CD4-positive, alpha-beta T cell (primary cell): ENCODE measurements at regions of chr12 and their contacts with region 1.

Region 1: DNA sequence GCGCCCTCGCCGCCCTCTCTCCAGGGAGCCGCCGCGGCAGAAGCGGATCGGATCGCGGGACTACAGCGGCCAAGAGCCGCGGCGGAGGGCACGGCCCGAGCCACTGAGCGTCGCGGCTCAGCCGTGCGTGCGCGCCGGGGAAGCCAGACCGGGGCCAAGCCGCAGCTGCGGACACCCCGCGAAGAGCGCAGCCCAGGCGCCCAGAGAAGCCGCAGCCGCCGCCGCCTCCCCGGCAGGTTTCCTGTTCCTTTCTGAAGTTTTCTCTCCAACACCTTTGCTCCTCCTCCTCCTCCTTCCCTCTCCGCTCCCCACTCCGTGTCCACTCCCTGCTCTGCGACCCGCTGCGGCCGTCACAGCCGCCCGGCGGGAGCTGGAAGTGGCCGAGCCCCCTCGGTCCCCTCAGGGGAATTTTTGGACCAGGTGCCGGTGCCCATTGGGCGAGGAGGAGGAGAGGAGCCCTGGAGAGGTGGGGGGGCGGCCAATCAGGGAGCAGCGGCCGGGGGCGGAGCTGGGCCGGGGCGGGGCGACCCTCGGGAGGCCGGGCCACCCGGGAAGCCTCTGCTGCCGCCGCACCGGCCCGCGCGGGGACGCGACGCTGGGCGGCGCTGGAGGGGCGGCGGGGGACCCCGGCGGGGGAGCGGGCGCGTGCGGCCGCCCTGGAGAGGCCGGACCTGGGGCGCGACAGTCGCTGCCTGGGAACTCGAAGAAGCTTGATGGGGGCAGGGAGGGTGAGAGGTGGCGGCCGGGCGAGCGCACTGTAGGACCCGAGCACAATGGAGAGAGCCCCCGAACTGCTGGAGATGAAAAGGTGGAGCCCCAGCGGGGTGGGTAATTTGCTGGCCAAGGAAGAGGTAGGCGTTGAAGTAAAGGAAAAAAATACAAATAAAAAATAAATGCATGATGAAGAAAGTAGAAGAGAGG is at the start of gene ITPR2:
- DNase-seq: peak; percentile 80 to 96 (median 92)
- ATAC-seq: peak; percentile 90
- H3K4me3 ChIP-seq: peak within 1 kb of the TSS; percentile 82
- H3K4me3 Mint-ChIP-seq: peak within 1 kb of the TSS; percentile 98
- H3K27ac ChIP-seq: peak within 1 kb of the TSS; percentile 89 to 92
- H3K27ac Mint-ChIP-seq: peak within 1 kb of the TSS; percentile 96
- H3K4me1 ChIP-seq: peaks cover 26% of the 10 kb centered on the region
- H3K4me1 Mint-ChIP-seq: peaks cover 47% of the 10 kb centered on the region
- H3K27me3 ChIP-seq: no peaks in the 10 kb centered on the region
- H3K27me3 Mint-ChIP-seq: no peaks in the 10 kb centered on the region
- CTCF ChIP-seq: peak; percentile 12
- total RNA-seq, gene ITPR2: 28.8 to 29.9 TPM

Region 2: DNA sequence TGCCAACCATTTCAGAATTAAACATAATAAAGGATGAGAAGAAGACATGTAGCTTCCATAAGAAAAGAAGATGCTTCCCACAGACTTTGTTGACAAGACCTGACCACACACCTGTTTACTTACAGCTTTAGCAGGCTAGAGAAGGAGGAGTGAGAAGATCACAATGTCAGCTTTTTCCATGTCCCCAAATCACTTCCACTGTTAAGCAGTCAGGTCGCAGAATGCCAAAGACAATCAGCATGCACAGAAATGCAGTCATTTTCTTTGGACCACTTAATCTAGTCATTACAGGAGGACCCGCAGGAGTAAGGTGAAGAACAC is 322.8 kb before region 1 on chr12:
- CTCF ChIA-PET with region 1: no interaction called
- POLR2A ChIA-PET with region 1: no interaction called
- intact Hi-C with region 1: no loop called
- DNase-seq: no peak
- ATAC-seq: no peak
- H3K4me3 ChIP-seq: no peak overlapping the region
- H3K4me3 Mint-ChIP-seq: no peak overlapping the region
- H3K27ac ChIP-seq: no peak overlapping the region
- H3K27ac Mint-ChIP-seq: no peak overlapping the region
- H3K4me1 ChIP-seq: no peaks in the 10 kb centered on the region
- H3K4me1 Mint-ChIP-seq: no peaks in the 10 kb centered on the region
- H3K27me3 ChIP-seq: no peaks in the 10 kb centered on the region
- H3K27me3 Mint-ChIP-seq: no peaks in the 10 kb centered on the region
- CTCF ChIP-seq: no peak

Region 3: DNA sequence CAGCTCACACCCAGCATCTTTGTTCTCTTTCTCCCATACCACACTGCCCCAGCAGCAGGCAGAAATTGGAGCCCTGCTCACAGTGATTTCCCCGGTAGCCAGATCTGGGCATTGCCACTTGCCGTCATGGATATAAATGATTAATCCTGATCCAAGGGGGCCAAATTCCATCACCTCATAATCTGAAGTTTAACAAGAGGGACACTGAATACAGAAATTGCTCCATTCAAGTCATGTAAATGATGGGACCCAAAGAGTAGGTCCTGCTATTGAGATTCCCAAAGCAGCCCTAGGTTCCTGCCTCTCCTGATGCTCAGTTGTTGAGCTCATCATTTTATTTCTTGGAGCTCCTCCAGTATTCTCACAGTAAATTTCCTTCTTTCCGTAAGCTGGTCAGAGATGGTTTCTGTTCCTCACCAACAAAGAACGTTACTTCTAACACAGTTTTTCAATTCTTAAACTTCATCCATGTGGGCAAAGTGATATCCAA is 11.8 kb before region 1 on chr12:
- CTCF ChIA-PET with region 1: interaction called, 12 read pairs
- POLR2A ChIA-PET with region 1: interaction called, 5 read pairs
- intact Hi-C with region 1: no loop called
- DNase-seq: no peak
- ATAC-seq: no peak
- H3K4me3 ChIP-seq: no peak overlapping the region
- H3K4me3 Mint-ChIP-seq: no peak overlapping the region
- H3K27ac ChIP-seq: no peak overlapping the region
- H3K27ac Mint-ChIP-seq: no peak overlapping the region
- H3K4me1 ChIP-seq: peaks cover 3% of the 10 kb centered on the region
- H3K4me1 Mint-ChIP-seq: peaks cover 43% of the 10 kb centered on the region
- H3K27me3 ChIP-seq: no peaks in the 10 kb centered on the region
- H3K27me3 Mint-ChIP-seq: no peaks in the 10 kb centered on the region
- CTCF ChIP-seq: no peak

Region 4: GRCh38 chr12:26884765-26885576 is 51.9 kb after region 1 on chr12:
- CTCF ChIA-PET with region 1: interaction called, 12 read pairs
- POLR2A ChIA-PET with region 1: interaction called, 6 read pairs
- intact Hi-C with region 1: no loop called
- DNase-seq: peak; percentile 68 to 91 (median 78)
- ATAC-seq: peak; percentile 100
- H3K4me3 ChIP-seq: peak overlapping the region; percentile 19
- H3K4me3 Mint-ChIP-seq: peak overlapping the region; percentile 36
- H3K27ac ChIP-seq: no peak overlapping the region
- H3K27ac Mint-ChIP-seq: no peak overlapping the region
- H3K4me1 ChIP-seq: peaks cover 9% of the 10 kb centered on the region
- H3K4me1 Mint-ChIP-seq: peaks cover 7% of the 10 kb centered on the region
- H3K27me3 ChIP-seq: no peaks in the 10 kb centered on the region
- H3K27me3 Mint-ChIP-seq: peaks cover 9% of the 10 kb centered on the region
- CTCF ChIP-seq: peak; percentile 96

Region 5: DNA sequence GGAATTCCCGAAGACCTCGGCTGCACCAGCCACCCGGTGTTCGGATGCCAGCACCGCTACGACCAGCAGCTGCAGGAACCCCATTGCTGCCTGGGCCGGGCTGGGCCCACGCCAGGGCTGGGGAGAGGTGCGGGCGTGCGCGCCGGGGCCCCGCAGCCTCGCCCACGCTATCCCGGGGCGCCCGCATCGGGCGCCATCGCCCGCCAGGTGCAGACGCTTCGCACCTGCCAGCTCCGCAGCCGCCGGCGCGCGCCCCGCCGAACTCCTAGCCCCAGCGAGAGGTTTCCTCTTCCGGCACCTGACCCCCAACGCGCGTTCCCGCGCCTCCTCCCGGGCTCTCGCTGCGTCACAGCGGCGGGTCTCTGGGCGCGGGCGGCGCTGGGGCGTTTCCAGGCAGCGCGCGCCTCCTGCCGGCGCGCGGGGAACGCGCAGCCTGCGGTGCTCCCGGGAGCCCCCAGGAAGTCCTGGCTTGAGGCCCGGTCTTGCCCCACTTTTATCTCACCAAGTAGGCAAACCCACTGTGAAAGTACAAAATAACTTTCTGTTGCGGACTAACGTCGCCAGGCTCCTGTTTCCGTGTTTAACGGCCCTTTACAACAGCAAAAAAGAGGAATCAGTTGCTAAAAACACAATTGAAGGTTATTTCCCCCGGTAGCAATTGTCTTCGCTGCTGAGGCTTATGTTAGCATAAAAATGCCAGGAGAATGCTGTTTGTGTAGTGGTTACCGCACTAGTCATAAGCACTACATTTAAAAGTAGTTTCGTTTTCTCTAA is 181.2 kb after region 1 on chr12 and contains the start of gene TM7SF3:
- CTCF ChIA-PET with region 1: interaction called, 16 read pairs
- POLR2A ChIA-PET with region 1: interaction called, 39 read pairs
- intact Hi-C with region 1: loop called in 1 of 2 experiments (anchors 2 kb)
- DNase-seq: peak; percentile 91 to 99 (median 96)
- ATAC-seq: peak; percentile 82
- H3K4me3 ChIP-seq: peak within 1 kb of the TSS; percentile 89
- H3K4me3 Mint-ChIP-seq: peak within 1 kb of the TSS; percentile 93
- H3K27ac ChIP-seq: peak within 1 kb of the TSS; percentile 92 to 96
- H3K27ac Mint-ChIP-seq: peak within 1 kb of the TSS; percentile 97
- H3K4me1 ChIP-seq: peaks cover 25% of the 10 kb centered on the region
- H3K4me1 Mint-ChIP-seq: peaks cover 57% of the 10 kb centered on the region
- H3K27me3 ChIP-seq: no peaks in the 10 kb centered on the region
- H3K27me3 Mint-ChIP-seq: no peaks in the 10 kb centered on the region
- CTCF ChIP-seq: peak; percentile 99
- total RNA-seq, gene TM7SF3: 8.3 to 9.5 TPM

Region 6: DNA sequence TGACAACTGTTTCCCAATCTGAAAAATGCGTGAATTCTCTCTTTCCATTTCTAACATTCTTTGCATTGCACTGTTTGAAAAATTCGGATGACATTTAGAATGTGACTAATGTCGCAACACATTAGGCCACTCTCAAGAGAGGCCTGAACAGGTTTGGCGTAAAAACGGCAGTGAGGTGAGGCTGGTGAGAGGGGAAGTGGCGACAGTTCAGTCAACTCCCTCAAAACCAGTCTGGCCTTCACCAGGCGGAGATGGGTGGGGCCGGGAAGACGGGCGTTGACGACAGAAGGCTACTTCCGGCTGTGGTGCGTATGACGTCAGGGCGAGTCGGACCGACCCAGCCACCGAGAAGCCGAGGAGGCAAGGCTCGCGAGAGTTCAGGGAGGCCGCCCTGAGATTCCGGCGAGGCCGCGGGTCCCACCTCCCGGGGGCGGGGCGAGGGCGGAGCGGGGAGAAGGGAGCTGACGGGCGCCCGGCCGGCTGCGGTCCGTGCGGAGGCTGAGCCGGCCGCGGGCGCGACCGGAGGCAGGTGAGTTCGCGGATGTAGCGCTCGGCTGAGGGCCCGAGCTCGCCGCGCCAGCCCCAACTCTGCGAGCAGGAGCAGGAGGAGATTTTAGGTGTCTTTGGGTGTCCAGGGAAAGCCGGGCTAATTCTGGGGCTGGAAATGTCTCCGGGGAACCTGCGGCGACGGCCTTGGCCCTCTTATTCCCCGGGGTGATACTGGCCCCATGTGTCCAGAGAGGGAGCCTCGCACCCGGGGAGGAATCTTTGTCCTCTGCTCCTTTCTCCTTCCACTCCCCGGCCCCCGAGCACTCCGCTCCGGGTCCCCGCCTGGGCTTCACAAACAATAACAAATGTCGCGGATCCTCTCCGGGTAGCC is 411.0 kb after region 1 on chr12 and contains the start of gene STK38L:
- CTCF ChIA-PET with region 1: no interaction called
- POLR2A ChIA-PET with region 1: interaction called, 9 read pairs
- intact Hi-C with region 1: loop called in 1 of 2 experiments (anchors 5 kb)
- DNase-seq: peak; percentile 87 to 99 (median 94)
- ATAC-seq: peak; percentile 95
- H3K4me3 ChIP-seq: peak within 1 kb of the TSS; percentile 93
- H3K4me3 Mint-ChIP-seq: peak within 1 kb of the TSS; percentile 99
- H3K27ac ChIP-seq: peak within 1 kb of the TSS; percentile 60 to 77
- H3K27ac Mint-ChIP-seq: peak within 1 kb of the TSS; percentile 92
- H3K4me1 ChIP-seq: peaks cover 15% of the 10 kb centered on the region
- H3K4me1 Mint-ChIP-seq: peaks cover 64% of the 10 kb centered on the region
- H3K27me3 ChIP-seq: no peaks in the 10 kb centered on the region
- H3K27me3 Mint-ChIP-seq: no peaks in the 10 kb centered on the region
- CTCF ChIP-seq: no peak
- total RNA-seq, gene STK38L: 18.3 to 21.0 TPM